ENCODE measurements at regions of chrX and their contacts with region 1.

Region 1: GRCh38 chrX:119145241-119145653 is 17.6 kb upstream of the KIAA1210 start:
- DNase-seq: peak; percentile 24
- H3K4me3 Mint-ChIP-seq: no peak overlapping the region
- H3K27ac Mint-ChIP-seq: no peak overlapping the region
- H3K4me1 Mint-ChIP-seq: peaks cover 14% of the 10 kb centered on the region
- H3K27me3 Mint-ChIP-seq: peaks cover 8% of the 10 kb centered on the region
- CTCF ChIP-seq: peak; percentile 32

Region 2: DNA sequence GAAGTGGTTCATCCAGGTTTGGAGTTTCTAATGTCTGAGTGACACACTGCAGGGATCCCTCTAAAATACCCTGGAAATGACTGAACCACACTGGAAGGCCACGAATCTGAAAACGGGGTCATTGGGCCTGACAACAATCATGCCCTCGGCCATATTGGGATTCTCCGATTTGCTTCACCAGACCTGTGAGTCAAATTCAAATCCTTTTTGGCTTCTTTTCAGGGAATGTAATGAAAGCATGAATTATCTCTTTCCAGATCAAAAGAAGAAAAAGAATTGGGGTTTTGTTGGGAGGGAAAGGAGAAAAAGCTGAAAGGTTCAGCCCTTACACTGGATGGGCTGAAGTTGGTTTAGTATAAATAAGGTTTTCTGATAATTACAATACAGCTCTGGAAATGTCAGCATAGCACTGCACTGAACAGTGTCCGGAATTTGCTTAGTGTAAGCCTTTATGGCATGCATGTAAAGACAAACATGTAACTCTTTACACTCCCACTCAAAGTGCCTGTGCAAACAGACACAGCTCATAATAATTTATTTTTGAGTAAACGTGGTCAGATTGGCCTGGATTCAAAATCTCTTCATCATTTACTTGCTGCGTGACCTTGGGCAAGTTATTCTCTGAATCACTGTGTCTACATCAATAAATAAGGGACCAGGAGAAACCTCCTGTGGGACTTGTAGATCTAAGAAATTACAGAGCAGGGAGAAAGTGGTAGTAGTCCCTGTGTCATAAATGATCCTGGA is 51.1 kb before region 1 on chrX:
- CTCF ChIA-PET with region 1: no interaction called
- intact Hi-C with region 1: no loop called
- DNase-seq: peak; percentile 3
- H3K4me3 Mint-ChIP-seq: no peak overlapping the region
- H3K27ac Mint-ChIP-seq: no peak overlapping the region
- H3K4me1 Mint-ChIP-seq: no peaks in the 10 kb centered on the region
- H3K27me3 Mint-ChIP-seq: peaks cover 59% of the 10 kb centered on the region
- CTCF ChIP-seq: no peak

Region 3: DNA sequence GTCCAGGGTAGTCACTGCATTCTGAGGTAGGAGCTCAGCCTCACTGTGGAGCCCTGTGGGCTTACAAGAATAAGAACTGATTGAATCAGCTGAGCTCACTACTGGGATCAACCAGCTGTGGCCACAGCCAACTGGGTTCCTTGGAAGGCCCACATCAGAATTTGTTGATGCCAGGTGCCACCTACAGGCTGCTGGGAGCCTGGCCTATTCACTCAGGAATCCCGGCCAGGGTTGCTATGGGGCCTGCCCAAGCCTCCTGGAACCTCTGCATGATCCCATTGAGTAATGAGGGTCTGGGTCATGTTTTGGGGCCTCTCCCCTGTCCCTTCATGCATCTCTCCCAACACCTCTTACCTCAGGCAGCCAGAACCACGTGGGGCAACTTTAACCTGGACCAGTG is 36.2 kb after region 1 on chrX:
- CTCF ChIA-PET with region 1: interaction called, 3 read pairs
- intact Hi-C with region 1: loop called (anchors 1 kb)
- DNase-seq: peak; percentile 52
- H3K4me3 Mint-ChIP-seq: no peak overlapping the region
- H3K27ac Mint-ChIP-seq: no peak overlapping the region
- H3K4me1 Mint-ChIP-seq: no peaks in the 10 kb centered on the region
- H3K27me3 Mint-ChIP-seq: peaks cover 3% of the 10 kb centered on the region
- CTCF ChIP-seq: no peak

Region 4: GRCh38 chrX:119222932-119223331 is 77.7 kb after region 1 on chrX:
- CTCF ChIA-PET with region 1: no interaction called
- intact Hi-C with region 1: loop called (anchors 2 kb)
- DNase-seq: no peak
- H3K4me3 Mint-ChIP-seq: no peak overlapping the region
- H3K27ac Mint-ChIP-seq: no peak overlapping the region
- H3K4me1 Mint-ChIP-seq: no peaks in the 10 kb centered on the region
- H3K27me3 Mint-ChIP-seq: peaks cover 80% of the 10 kb centered on the region
- CTCF ChIP-seq: no peak